ENCODE measurements at regions of chr9 and their contacts with region 1.

Region 1: DNA sequence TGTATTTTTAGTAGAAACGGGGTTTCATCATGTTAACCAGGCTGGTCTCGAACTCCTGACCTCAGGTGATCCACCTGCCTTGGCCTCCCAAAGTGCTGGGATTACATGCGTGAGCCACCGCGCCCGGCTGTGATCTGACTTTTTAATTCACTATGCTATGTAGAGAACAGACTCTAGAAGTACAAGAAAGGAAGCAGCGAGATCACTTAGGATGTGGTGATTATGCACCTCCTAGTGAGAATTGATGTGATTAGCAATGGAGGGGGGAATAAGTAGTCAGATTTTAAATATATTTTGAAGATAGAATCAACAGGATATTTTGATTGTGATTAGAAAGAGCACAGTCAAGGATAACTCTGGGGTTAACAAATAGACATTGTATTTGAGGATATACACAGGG is 36.3 kb downstream of the GAPVD1 start:
- DNase-seq: no peak
- CTCF ChIP-seq: no peak

Region 2: DNA sequence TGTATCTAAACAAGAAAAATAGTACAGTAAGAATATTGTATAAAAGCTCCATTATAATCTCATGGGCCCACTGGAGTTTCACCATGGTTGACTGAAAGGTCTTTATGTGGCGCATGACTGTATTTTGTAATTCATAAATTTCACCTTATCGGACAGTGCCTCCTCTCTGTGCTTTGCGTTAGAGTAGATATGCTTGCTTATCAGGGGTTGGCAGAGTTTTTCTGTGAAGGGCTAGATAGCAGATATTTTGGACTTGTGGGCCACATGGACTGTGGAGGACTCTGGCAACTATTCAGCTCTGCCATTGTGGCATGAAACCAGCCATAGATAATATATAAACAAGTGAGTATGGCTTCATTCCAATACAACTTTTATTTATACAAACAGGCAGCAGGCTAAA is 13.1 kb before region 1 on chr9:
- CTCF ChIA-PET with region 1: interaction called, 3 read pairs
- POLR2A ChIA-PET with region 1: interaction called, 16 read pairs
- DNase-seq: no peak
- CTCF ChIP-seq: no peak